ENCODE measurements at regions of chr5 and their contacts with region 1.

Region 1: DNA sequence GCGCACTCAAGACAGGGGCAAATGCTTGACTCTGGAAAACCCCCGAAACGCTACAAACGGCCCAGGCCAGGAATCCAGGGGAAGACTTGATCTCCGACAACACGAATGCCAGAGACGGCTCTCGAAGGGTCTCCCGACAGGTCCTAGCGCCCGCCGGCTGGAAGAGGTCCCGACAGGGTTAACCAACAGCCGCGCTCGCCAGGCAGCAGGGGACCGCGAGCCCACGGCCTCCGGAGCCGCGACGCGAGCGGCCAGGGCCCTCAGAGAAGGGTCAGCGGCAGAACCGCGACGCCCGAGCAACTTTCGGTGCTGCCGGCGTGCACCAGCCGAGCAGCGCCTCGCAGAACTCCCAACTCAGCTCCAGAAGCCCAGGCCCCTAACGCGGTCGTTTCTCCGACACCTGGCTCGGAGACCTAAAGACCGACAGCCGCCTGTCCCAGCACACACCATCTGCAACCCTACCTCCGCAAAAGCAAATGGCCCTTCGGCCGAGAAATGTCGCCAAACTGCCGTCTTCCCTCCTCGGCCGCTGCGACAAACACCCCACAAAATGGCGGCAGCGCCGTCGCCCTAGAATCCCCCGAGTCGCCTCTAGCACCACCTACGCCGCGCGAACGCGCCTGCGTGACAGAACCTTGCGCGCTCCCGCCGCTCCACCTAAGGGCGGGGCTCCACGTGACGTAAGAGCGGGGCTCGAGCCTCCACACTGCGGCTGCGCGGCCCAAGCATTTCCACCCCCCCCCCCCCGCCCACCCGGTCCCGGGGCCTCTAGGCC is at the start of gene CLK4:
- DNase-seq: peak; percentile 97
- H3K4me3 Mint-ChIP-seq: peak within 1 kb of the TSS; percentile 97
- H3K27ac Mint-ChIP-seq: peak within 1 kb of the TSS; percentile 95
- H3K4me1 Mint-ChIP-seq: peaks cover 28% of the 10 kb centered on the region
- H3K27me3 Mint-ChIP-seq: no peaks in the 10 kb centered on the region
- total RNA-seq, gene CLK4: 33.9 to 34.9 TPM

Region 2: GRCh38 chr5:177592010-177592834 is 1034.4 kb before region 1 on chr5 and contains the start of gene TMED9:
- CTCF ChIA-PET with region 1: no interaction called
- intact Hi-C with region 1: loop called (anchors 10 kb)
- DNase-seq: peak; percentile 88
- H3K4me3 Mint-ChIP-seq: peak within 1 kb of the TSS; percentile 98
- H3K27ac Mint-ChIP-seq: peak within 1 kb of the TSS; percentile 94
- H3K4me1 Mint-ChIP-seq: peaks cover 35% of the 10 kb centered on the region
- H3K27me3 Mint-ChIP-seq: peaks cover 9% of the 10 kb centered on the region
- total RNA-seq, gene TMED9: 110 TPM

Region 3: GRCh38 chr5:178706591-178706990 is 79.9 kb after region 1 on chr5:
- CTCF ChIA-PET with region 1: no interaction called
- intact Hi-C with region 1: no loop called
- DNase-seq: no peak
- H3K4me3 Mint-ChIP-seq: no peak overlapping the region
- H3K27ac Mint-ChIP-seq: no peak overlapping the region
- H3K4me1 Mint-ChIP-seq: no peaks in the 10 kb centered on the region
- H3K27me3 Mint-ChIP-seq: no peaks in the 10 kb centered on the region

Region 4: DNA sequence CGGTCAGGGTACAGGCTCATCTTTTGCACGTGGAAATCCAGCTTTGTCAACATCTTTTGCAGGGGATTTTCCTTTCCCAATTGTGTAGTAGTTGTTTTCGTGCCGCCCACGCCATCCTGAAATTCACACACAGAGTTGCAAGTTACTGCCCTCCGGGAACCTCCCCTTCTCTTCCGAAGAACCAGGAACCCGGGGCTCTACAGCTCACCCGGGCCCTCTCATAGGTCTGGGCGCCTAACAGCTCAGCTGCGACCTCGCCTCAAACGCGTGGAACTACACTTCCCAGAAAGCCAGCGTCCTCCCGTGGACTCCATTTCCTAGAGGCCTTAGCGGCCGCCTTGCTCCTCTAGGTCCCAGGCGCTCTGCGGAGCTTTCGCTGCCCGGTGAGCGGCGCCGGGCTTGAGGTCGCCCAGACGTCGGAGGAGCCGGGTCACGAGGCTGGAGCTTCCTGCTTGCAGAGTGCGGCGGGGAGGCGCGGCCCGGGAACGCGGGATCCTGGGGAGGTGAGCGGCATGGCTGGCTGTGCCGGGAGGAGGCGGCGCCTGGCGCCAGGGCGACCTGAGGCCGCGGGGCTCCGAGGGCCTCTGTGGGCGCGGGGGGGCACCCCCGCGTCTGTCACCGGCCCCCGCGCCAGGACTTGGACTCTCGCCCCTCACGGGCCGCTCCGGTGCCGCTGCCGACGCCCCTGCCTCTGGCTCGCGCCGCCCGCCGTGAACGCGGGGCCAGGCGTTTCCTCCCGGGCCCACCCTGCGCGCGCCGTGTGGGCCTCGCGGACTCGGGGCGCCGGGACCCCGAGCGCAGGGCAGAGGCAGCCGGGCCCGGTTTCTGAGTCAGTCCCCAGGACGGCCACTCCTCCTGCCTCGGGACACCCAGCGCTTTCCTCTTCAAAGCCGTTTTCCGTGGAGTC is 233.2 kb after region 1 on chr5 and contains the start of gene ZNF354B:
- CTCF ChIA-PET with region 1: no interaction called
- intact Hi-C with region 1: loop called (anchors 2 kb)
- DNase-seq: peak; percentile 91
- H3K4me3 Mint-ChIP-seq: peak within 1 kb of the TSS; percentile 89
- H3K27ac Mint-ChIP-seq: peak within 1 kb of the TSS; percentile 66
- H3K4me1 Mint-ChIP-seq: peaks cover 21% of the 10 kb centered on the region
- H3K27me3 Mint-ChIP-seq: no peaks in the 10 kb centered on the region
- total RNA-seq, gene ZNF354B: 8.6 to 8.9 TPM

Region 5: GRCh38 chr5:179023528-179024430 is 397.1 kb after region 1 on chr5 and contains the start of gene ZNF879:
- CTCF ChIA-PET with region 1: no interaction called
- intact Hi-C with region 1: loop called (anchors 5 kb)
- DNase-seq: peak; percentile 95
- H3K4me3 Mint-ChIP-seq: peak within 1 kb of the TSS; percentile 97
- H3K27ac Mint-ChIP-seq: peak within 1 kb of the TSS; percentile 90
- H3K4me1 Mint-ChIP-seq: peaks cover 7% of the 10 kb centered on the region
- H3K27me3 Mint-ChIP-seq: peaks cover 1% of the 10 kb centered on the region
- total RNA-seq, gene ZNF879: 1.8 to 2.0 TPM

Region 6: GRCh38 chr5:179530069-179530998 is 903.7 kb after region 1 on chr5:
- CTCF ChIA-PET with region 1: no interaction called
- intact Hi-C with region 1: loop called (anchors 5 kb)
- DNase-seq: peak; percentile 78
- H3K4me3 Mint-ChIP-seq: peak overlapping the region; percentile 48
- H3K27ac Mint-ChIP-seq: no peak overlapping the region
- H3K4me1 Mint-ChIP-seq: peaks cover 15% of the 10 kb centered on the region
- H3K27me3 Mint-ChIP-seq: no peaks in the 10 kb centered on the region

Region 7: DNA sequence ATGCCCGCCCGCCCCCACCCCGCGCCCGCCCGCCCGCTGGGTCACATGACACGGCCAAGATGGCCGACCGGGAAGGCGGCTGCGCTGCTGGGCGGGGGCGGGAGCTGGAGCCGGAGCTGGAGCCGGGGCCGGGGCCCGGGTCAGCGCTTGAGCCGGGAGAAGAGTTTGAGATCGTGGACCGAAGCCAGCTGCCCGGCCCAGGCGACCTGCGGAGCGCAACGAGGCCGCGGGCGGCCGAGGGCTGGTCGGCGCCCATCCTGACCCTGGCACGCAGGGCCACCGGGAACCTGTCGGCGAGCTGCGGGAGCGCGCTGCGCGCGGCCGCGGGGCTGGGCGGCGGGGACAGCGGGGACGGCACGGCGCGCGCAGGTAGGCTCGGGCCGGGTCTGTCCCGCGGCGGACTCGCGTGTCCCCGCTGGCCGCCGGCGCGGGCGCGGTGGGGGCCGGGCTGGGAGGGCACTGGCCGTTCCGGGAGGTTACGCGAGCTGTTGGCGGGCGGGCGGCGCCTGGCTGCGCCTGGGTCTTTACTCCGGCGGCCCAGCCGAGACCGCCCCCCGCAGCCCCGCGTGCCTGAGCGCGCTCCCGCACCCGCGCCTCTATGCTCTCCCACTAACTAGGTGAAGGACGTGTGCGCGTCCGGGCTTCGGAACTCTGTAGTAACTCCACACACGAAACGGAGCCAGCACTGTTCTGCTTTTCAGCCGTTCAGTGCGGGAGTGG is 924.0 kb after region 1 on chr5 and contains the start of gene RUFY1:
- CTCF ChIA-PET with region 1: no interaction called
- intact Hi-C with region 1: loop called (anchors 5 kb)
- DNase-seq: peak; percentile 77
- H3K4me3 Mint-ChIP-seq: peak within 1 kb of the TSS; percentile 97
- H3K27ac Mint-ChIP-seq: peak within 1 kb of the TSS; percentile 98
- H3K4me1 Mint-ChIP-seq: peaks cover 33% of the 10 kb centered on the region
- H3K27me3 Mint-ChIP-seq: no peaks in the 10 kb centered on the region
- total RNA-seq, gene RUFY1: 27.8 to 31.0 TPM

Measured in activated naive CD4-positive, alpha-beta T cell treated with anti-CD3 and anti-CD28 coated beads for 36 hours (primary cell).